ENCODE measurements at regions of chr9 and their contacts with region 1.

Region 1: DNA sequence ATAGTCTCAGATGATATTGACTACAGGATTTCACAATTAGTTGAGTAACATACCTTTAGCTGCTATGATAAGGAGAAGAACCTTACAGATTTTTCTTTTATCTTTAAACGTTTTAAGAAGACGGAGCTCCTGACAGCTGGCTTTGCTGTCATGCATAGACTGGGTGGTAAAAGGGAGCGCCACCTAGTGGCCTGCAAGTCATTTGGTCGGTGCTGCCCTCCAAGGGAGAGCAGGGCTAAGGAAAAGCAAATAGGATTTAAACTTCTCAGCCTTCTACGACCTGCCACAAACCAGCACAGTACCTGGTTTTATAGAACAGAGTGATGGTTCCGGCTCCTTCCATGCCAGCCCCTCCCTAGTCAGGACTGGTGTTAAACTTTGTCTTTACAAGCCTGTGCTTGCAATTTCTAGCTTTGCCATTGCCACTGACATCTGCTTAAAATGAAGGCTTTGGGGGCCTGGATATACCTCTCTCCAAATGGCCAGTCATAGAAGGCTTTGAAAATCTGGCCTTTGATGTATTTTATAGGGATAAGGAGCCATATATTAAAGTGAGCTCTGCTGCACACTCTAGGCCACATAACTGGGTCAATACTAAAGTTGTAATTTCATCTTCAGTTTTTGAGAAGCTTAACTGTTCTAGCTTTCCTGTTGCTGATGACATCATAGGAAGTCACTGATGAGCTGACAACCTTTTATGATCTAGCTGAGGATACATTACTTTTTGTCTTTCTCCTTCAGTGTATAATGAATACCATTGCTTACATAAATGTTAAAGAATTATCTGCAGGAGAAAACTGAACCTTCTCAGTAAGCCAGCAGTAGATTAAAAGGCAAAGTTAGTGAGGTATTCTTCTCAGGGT is 31.1 kb upstream of the ADAMTSL1 start:
- DNase-seq: peak; percentile 27
- H3K4me3 Mint-ChIP-seq: no peak overlapping the region
- H3K27ac Mint-ChIP-seq: no peak overlapping the region
- H3K4me1 Mint-ChIP-seq: no peaks in the 10 kb centered on the region
- H3K27me3 Mint-ChIP-seq: peaks cover 12% of the 10 kb centered on the region

Region 2: GRCh38 chr9:18255158-18255629 is 187.7 kb before region 1 on chr9:
- intact Hi-C with region 1: loop called (anchors 1 kb)
- DNase-seq: peak; percentile 48
- H3K4me3 Mint-ChIP-seq: no peak overlapping the region
- H3K27ac Mint-ChIP-seq: no peak overlapping the region
- H3K4me1 Mint-ChIP-seq: peaks cover 7% of the 10 kb centered on the region
- H3K27me3 Mint-ChIP-seq: peaks cover 6% of the 10 kb centered on the region